Activated CD8-positive, alpha-beta T cell treated with anti-CD3 and anti-CD28 coated beads, Interleukin-2, amount 10 ng/mL, durations not matched to agents 7 days and 5 days (primary cell): ENCODE measurements at regions of chr1 and their contacts with region 1.

Region 1: DNA sequence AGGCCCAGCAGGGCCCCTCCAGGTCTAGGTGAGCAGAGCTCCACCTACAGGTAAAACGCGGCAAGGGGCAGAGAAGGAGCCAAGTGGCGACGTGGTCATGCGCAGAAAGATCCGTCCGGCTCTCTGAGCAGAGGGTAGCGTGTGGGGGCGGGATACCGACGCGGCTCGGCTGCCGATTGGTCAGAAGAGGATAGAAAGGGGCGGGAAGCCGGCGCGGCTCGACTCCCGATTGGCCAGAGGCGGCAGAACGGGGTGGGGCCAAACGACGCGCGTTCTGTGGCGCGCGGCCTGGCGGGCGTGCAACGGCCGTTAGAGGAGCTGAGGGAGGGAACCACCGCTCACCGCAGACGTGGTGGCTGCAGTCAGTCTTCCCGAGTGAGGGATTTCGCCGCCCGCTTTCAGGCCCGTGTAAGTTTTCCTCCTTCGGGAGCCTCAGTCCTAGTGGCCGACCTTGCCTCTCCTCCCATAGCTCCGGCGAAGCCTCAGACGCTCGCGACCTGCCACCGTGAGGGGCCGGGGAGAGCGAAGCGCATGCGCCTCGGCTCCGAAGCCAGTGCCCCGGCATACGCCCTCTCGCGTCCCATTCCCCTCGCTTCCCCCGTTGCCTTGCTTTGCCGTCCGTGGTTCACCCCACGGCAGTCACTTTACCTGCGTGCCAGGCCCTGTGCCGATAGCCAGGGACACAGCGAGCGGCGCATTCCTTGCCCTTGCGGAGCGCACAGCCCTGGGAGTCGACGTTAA is at the start of gene CEP85:
- DNase-seq: peak; percentile 99
- ATAC-seq: peak; percentile 96
- H3K4me3 Mint-ChIP-seq: peak within 1 kb of the TSS; percentile 97
- H3K27ac Mint-ChIP-seq: peak within 1 kb of the TSS; percentile 93
- H3K4me1 Mint-ChIP-seq: peaks cover 35% of the 10 kb centered on the region
- H3K27me3 Mint-ChIP-seq: no peaks in the 10 kb centered on the region
- total RNA-seq, gene CEP85: 48.7 to 49.1 TPM

Region 2: GRCh38 chr1:25944986-25945385 is 289.1 kb before region 1 on chr1:
- CTCF ChIA-PET with region 1: no interaction called
- POLR2A ChIA-PET with region 1: no interaction called
- DNase-seq: no peak
- ATAC-seq: no peak
- H3K4me3 Mint-ChIP-seq: no peak overlapping the region
- H3K27ac Mint-ChIP-seq: no peak overlapping the region
- H3K4me1 Mint-ChIP-seq: no peaks in the 10 kb centered on the region
- H3K27me3 Mint-ChIP-seq: no peaks in the 10 kb centered on the region

Region 3: DNA sequence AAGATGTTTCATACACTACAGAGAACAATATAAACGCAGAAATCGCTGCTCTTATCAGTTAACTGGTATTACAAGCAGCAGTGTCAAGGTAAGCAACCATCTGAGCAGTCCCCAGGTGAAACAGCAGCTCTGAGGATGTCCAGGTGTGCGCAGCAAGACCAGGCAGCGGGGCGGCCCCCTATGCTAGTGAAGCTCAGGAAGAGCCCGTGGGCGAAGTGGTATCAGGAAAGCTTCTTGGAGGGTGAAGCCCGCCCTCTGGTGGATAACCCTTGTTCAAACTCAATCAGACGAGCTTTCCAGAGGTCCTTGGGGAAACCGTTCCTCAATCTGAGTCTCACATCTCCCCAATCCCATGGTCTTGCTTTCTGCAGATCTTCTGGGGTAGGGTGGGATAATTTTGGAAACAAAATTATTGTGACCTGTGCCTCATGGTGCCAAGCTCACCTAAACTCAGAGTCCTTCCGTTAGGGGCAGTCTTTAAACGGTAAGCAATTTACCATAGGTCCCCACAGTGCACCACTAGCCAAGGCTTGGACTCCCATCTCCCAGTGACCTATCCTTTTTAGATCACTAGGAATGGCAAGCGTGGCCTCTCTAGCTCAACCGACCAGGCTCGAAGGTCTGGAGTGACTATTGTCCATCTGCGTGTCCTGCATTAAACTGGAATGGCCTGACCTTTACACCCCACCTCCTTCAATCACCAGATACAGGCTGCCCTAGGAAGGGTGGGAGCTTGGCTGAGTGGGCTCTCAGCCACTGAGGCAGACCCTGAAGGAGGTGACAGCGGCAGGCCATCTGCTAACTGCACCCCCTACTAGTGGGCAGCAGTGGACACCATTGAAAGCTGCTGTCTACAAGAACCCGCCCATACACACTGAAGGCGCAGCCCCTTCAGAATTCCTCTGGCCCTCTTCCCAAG is 88.8 kb before region 1 on chr1:
- CTCF ChIA-PET with region 1: interaction called, 19 read pairs
- POLR2A ChIA-PET with region 1: no interaction called
- DNase-seq: peak; percentile 86
- ATAC-seq: peak; percentile 95
- H3K4me3 Mint-ChIP-seq: no peak overlapping the region
- H3K27ac Mint-ChIP-seq: no peak overlapping the region
- H3K4me1 Mint-ChIP-seq: peaks cover 7% of the 10 kb centered on the region
- H3K27me3 Mint-ChIP-seq: peaks cover 23% of the 10 kb centered on the region

Region 4: GRCh38 chr1:26203642-26204318 is 30.3 kb before region 1 on chr1:
- CTCF ChIA-PET with region 1: interaction called, 34 read pairs
- POLR2A ChIA-PET with region 1: no interaction called
- DNase-seq: no peak
- ATAC-seq: no peak
- H3K4me3 Mint-ChIP-seq: no peak overlapping the region
- H3K27ac Mint-ChIP-seq: no peak overlapping the region
- H3K4me1 Mint-ChIP-seq: peaks cover 37% of the 10 kb centered on the region
- H3K27me3 Mint-ChIP-seq: peaks cover 4% of the 10 kb centered on the region

Region 5: GRCh38 chr1:26279456-26280332 is 45.6 kb after region 1 on chr1 and contains the start of gene SH3BGRL3:
- CTCF ChIA-PET with region 1: interaction called, 74 read pairs
- POLR2A ChIA-PET with region 1: no interaction called
- DNase-seq: peak; percentile 90
- ATAC-seq: peak; percentile 64
- H3K4me3 Mint-ChIP-seq: peak within 1 kb of the TSS; percentile 89
- H3K27ac Mint-ChIP-seq: peak within 1 kb of the TSS; percentile 96
- H3K4me1 Mint-ChIP-seq: peaks cover 85% of the 10 kb centered on the region
- H3K27me3 Mint-ChIP-seq: no peaks in the 10 kb centered on the region
- total RNA-seq, gene SH3BGRL3: 795 to 814 TPM

Region 6: GRCh38 chr1:26363549-26364448 is 129.7 kb after region 1 on chr1:
- CTCF ChIA-PET with region 1: interaction called, 11 read pairs
- POLR2A ChIA-PET with region 1: no interaction called
- DNase-seq: peak; percentile 93
- ATAC-seq: peak; percentile 76
- H3K4me3 Mint-ChIP-seq: peak overlapping the region; percentile 58
- H3K27ac Mint-ChIP-seq: peak overlapping the region; percentile 70
- H3K4me1 Mint-ChIP-seq: peaks cover 78% of the 10 kb centered on the region
- H3K27me3 Mint-ChIP-seq: peaks cover 11% of the 10 kb centered on the region

Region 7: GRCh38 chr1:26431979-26432695 is 198.1 kb after region 1 on chr1 and contains the start of gene DHDDS:
- CTCF ChIA-PET with region 1: interaction called, 15 read pairs
- POLR2A ChIA-PET with region 1: interaction called, 5 read pairs
- DNase-seq: peak; percentile 99
- ATAC-seq: peak; percentile 98
- H3K4me3 Mint-ChIP-seq: peak within 1 kb of the TSS; percentile 91
- H3K27ac Mint-ChIP-seq: peak within 1 kb of the TSS; percentile 93
- H3K4me1 Mint-ChIP-seq: peaks cover 26% of the 10 kb centered on the region
- H3K27me3 Mint-ChIP-seq: no peaks in the 10 kb centered on the region
- total RNA-seq, gene DHDDS: 48.3 to 49.5 TPM